ENCODE measurements at regions of chr17 and their contacts with region 1.

Region 1: GRCh38 chr17:1516388-1517161 is at the start of gene INPP5K:
- DNase-seq: peak; percentile 97 to 98
- H3K4me3 ChIP-seq: peak within 1 kb of the TSS; percentile 96 to 98
- H3K27ac ChIP-seq: peak within 1 kb of the TSS; percentile 93
- H3K4me1 ChIP-seq: peaks cover 0 to 6% of the 10 kb centered on the region in 2 donors
- H3K27me3 ChIP-seq: no peaks in the 10 kb centered on the region
- CTCF ChIP-seq: peak in 3 of 4 experiments; percentile 30 to 44 (median 34)
- POLR2A ChIP-seq: peak; percentile 19 to 59
- total RNA-seq, gene INPP5K: 14.1 to 49.3 (median 31.4) TPM

Region 2: DNA sequence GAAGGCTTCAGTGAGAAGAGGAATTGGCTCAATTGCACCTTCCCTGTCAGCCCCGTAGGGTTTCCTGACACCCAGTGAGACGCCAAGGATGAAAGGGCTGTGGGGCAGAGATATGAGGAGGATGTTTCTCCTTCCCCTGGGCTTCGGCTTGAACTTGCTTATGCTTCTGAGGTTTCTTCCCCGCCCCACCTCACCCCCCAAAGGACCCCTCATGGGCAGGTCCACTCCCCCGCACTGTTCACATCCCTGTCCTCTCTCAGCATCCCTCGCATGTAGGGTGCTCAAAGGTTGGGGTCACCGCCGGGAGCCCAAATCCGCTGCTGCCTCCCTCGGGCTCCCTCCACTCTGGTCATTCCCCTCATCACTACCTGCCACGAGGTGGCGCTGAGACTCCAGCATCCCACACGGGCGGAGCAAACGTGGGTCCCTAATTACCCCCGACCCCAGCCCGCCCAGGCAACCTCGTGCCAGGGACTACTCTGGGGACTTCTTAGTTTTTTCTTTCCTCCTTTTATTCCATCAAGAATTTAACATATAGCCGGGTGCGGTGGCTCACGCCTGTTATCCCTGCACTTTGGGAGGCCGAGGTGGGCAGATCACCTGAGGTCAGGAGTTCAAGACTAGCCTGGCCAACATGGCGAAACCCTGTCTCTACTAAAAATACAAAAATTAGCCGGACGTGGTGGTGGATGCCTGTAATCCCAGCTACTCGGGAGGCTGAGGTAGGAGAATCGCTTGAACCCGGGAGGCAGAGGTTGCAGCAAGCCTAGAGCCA is 240.4 kb before region 1 on chr17:
- intact Hi-C with region 1: loop called (anchors 10 kb)
- DNase-seq: peak; percentile 47 to 49
- H3K4me3 ChIP-seq: no peak overlapping the region
- H3K27ac ChIP-seq: no peak overlapping the region
- H3K4me1 ChIP-seq: no peaks in the 10 kb centered on the region
- H3K27me3 ChIP-seq: no peaks in the 10 kb centered on the region
- CTCF ChIP-seq: peak; percentile 66 to 81 (median 75)
- POLR2A ChIP-seq: no peak

Region 3: DNA sequence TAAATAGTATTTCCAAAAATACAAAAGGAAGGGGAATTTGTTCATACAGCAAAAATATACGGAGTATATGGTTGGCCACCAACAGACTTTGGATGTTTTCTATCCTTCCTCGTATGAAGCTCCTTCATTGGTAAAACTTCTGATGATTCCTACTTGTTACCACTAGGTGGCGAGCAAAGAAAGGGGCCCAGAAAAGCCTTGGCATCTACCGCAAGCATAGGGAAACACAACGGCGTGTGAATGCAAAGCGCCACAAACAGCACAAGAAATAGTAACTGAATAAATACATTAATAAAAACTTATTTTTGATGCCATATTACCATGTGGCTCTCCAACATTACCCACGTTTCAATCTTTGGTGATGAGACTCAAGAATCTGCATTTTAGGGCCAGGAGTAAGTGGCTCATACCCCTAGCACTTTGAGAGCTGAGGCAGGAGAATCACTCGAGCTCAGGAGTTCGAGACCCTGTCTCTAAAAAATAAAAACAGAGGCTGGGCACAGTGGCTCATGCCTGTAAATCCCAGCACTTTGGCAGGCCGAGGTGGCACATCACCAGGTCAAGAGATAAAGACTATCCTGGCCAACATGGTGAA is 151.0 kb before region 1 on chr17:
- intact Hi-C with region 1: loop called (anchors 10 kb)
- DNase-seq: peak; percentile 46 to 69
- H3K4me3 ChIP-seq: peak overlapping the region in 1 of 2 donors; percentile 16
- H3K27ac ChIP-seq: peak overlapping the region; percentile 45 to 72
- H3K4me1 ChIP-seq: peaks cover 19 to 30% of the 10 kb centered on the region in 2 donors
- H3K27me3 ChIP-seq: no peaks in the 10 kb centered on the region
- CTCF ChIP-seq: peak; percentile 83 to 92 (median 89)
- POLR2A ChIP-seq: no peak

Region 4: GRCh38 chr17:1413281-1413791 is 103.2 kb before region 1 on chr17:
- intact Hi-C with region 1: no loop called
- DNase-seq: peak; percentile 27 to 31
- H3K4me3 ChIP-seq: no peak overlapping the region
- H3K27ac ChIP-seq: no peak overlapping the region
- H3K4me1 ChIP-seq: no peaks in the 10 kb centered on the region
- H3K27me3 ChIP-seq: no peaks in the 10 kb centered on the region
- CTCF ChIP-seq: no peak
- POLR2A ChIP-seq: no peak

Region 5: GRCh38 chr17:1455797-1456599 is 60.6 kb before region 1 on chr17 and contains the start of gene CRK:
- intact Hi-C with region 1: no loop called
- DNase-seq: peak; percentile 94 to 97
- H3K4me3 ChIP-seq: peak within 1 kb of the TSS; percentile 81 to 96
- H3K27ac ChIP-seq: peak within 1 kb of the TSS; percentile 94 to 95
- H3K4me1 ChIP-seq: peaks cover 5 to 9% of the 10 kb centered on the region in 2 donors
- H3K27me3 ChIP-seq: no peaks in the 10 kb centered on the region
- CTCF ChIP-seq: peak in 3 of 4 experiments; percentile 18 to 35 (median 28)
- POLR2A ChIP-seq: peak; percentile 89 to 98
- total RNA-seq, gene CRK: 34.6 to 118 (median 57.3) TPM

Region 6: DNA sequence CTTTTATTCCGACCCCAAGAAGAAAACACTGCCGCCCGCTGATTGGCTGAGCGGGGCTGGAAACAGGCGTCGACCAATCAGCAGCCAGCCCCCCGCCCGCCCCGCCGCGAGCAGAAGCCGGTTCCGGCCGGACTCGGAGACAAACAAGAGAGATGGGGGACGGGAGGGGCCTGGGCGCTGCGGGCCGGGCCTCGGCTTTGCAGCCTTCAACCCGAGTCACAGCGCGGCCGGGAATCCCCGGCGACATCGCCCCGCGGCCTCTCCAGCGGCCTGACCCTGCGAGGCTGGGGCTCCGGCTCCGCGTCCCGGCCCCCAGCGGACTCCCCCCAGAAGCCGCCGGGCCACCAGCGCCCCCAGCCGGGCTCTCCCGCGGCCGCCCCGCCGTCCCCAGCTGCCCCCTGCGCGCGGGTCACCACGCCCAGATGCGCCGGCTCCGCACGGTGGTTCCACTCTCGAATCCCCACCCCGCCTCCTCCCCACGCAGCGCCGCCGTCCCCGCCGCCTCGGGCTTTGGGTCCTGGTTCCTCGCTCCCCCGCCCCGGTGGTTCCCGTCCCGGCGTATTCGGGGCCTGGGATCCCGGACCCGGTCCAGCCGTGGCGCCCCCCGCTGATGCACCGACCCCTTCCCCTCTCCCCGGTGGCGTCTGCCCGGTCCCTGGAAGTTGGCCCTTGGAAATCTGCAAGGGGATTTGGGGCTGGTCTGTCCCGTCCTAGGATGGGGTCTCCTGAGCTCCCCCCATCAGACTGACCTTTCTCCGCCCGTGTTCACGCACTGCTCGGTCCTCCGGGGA is 112.5 kb after region 1 on chr17:
- intact Hi-C with region 1: no loop called
- DNase-seq: peak; percentile 91 to 93
- H3K4me3 ChIP-seq: peak overlapping the region; percentile 62 to 77
- H3K27ac ChIP-seq: peak overlapping the region; percentile 85 to 88
- H3K4me1 ChIP-seq: no peaks in the 10 kb centered on the region
- H3K27me3 ChIP-seq: no peaks in the 10 kb centered on the region
- CTCF ChIP-seq: peak; percentile 19 to 59 (median 42)
- POLR2A ChIP-seq: peak; percentile 16 to 48

Measured in uterus (tissue), 4 donors.